Activated CD8-positive, alpha-beta T cell treated with anti-CD3 and anti-CD28 coated beads, Interleukin-2, amount 10 ng/mL, durations not matched to agents 7 days and 5 days (primary cell): ENCODE measurements at regions of chr22 and their contacts with region 1.

Region 1: DNA sequence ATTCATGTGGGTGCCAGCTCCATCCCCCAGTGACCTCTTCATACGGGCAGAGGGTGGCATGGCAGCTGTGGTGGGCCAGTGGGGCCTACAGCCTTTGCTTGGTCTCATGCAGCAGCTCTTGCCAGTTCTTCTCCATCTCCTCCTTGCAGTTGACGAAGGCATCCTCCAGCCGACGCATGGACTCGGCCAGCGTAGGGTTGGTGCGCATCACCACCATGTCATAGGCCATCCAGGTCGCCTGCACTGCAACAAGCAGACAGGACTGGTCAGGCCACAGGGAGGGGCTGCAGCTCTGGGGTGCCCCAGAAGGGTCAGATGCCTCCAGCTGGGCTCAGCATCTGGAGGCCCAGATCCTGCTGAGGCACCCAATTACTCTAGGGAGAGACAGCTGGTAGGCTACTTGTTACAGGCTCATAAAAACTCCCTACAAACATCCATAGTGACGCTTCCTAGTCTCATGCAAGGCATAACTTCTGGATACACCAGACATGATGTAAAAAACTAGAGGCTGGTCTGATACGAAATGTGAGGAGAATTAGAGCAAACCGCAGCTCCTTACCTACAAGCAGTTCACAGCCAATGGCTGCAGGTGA is 5.6 kb downstream of the KLHDC7B start:
- DNase-seq: no peak
- ATAC-seq: no peak
- H3K4me3 Mint-ChIP-seq: no peak overlapping the region
- H3K27ac Mint-ChIP-seq: no peak overlapping the region
- H3K4me1 Mint-ChIP-seq: peaks cover 18% of the 10 kb centered on the region
- H3K27me3 Mint-ChIP-seq: peaks cover 7% of the 10 kb centered on the region

Region 2: DNA sequence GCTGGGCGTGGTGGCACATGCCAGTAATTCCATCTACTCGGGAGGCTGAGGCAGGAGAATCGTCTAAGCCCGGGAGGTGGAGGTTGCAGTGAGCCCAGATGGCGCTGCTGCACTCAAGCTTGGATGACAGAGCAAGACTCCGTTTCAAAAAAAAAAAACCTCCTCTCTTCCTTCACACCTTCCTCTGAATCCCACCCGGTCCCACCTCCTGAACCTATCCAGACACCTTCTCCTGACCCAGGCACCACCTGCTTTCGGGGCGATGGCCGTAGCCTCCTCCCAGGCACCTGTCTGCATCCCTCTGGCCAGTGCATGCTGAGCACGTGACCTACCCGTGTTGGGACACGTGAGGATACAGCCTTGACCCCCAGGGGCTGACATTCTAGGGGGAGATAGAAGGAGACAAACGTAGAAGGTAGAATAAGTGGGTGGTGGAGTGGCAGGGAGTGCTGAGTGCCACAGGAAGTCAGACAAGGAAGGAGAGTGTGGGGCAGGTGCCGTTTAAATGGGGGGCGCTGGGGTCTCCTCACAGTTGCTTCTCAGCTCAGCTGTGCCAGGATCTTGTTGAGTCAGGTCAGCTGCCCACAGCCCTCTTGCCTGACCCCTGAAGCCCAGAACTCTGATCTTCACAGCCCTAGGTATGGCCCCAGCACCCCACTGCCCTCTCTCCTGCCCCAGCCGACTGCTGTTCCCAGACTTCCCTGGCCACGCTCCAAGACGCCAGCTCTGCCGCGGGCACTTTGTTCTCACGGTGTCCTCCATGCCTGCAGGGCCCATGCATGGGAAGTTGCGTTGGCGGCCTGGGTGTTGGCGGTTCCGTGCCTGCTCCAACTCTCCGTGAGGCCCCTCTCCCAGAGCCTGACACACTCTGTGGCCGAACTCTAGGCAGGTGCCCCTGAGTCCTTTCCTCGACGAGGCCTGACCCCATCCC is 65.8 kb before region 1 on chr22:
- CTCF ChIA-PET with region 1: no interaction called
- POLR2A ChIA-PET with region 1: no interaction called
- DNase-seq: no peak
- ATAC-seq: no peak
- H3K4me3 Mint-ChIP-seq: no peak overlapping the region
- H3K27ac Mint-ChIP-seq: no peak overlapping the region
- H3K4me1 Mint-ChIP-seq: peaks cover 2% of the 10 kb centered on the region
- H3K27me3 Mint-ChIP-seq: peaks cover 2% of the 10 kb centered on the region

Region 3: GRCh38 chr22:50537765-50538164 is 13.5 kb before region 1 on chr22:
- CTCF ChIA-PET with region 1: interaction called, 20 read pairs
- POLR2A ChIA-PET with region 1: interaction called, 142 read pairs
- DNase-seq: no peak
- ATAC-seq: no peak
- H3K4me3 Mint-ChIP-seq: no peak overlapping the region
- H3K27ac Mint-ChIP-seq: peak overlapping the region; percentile 100
- H3K4me1 Mint-ChIP-seq: peaks cover 73% of the 10 kb centered on the region
- H3K27me3 Mint-ChIP-seq: no peaks in the 10 kb centered on the region